ENCODE measurements at regions of chr7 and their contacts with region 1.

Region 1: DNA sequence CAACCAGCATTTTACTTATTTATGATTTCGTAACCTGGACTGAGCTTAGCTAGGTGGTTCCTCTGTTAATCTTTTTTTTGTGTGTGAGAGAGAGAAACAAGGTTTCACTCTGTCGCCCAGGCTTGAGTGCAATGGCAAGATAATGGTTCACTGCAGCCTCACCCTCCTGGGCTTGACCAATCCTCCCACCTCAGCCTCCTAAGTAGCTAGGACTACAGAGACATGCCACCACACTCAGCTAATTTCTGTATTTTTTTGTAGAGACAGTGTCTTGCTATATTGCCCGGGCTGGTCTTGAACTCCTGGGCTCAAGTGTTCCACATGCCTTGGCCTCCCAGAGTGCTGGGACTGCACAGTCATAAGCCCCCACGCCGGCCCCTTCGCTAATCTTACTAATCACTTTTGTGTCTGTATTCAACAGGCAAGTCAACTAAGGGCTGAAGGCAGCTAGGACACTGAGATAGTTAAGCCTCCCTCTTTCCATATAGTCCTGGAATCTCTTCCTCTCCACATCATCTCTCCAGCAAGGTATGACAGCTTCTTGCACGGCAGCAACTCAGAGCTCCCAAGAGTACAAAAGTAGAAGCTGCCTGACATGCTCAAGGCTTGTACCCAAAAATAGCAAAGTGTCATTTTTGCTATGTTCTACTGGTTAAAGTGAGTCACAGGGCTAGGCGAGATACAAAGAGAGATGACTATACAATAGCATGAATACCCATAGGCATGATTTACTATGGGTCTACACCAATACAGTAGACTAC is 11.3 kb downstream of the KMT2C start:
- DNase-seq: no peak
- H3K4me3 Mint-ChIP-seq: no peak overlapping the region
- H3K27ac Mint-ChIP-seq: peak overlapping the region; percentile 66
- H3K4me1 Mint-ChIP-seq: peaks cover 45% of the 10 kb centered on the region
- H3K27me3 Mint-ChIP-seq: no peaks in the 10 kb centered on the region

Region 2: GRCh38 chr7:152180587-152180986 is 243.9 kb before region 1 on chr7:
- intact Hi-C with region 1: no loop called
- DNase-seq: no peak
- H3K4me3 Mint-ChIP-seq: no peak overlapping the region
- H3K27ac Mint-ChIP-seq: no peak overlapping the region
- H3K4me1 Mint-ChIP-seq: peaks cover 17% of the 10 kb centered on the region
- H3K27me3 Mint-ChIP-seq: no peaks in the 10 kb centered on the region

Region 3: GRCh38 chr7:152383341-152384234 is 40.9 kb before region 1 on chr7:
- intact Hi-C with region 1: loop called (anchors 5 kb)
- DNase-seq: no peak
- H3K4me3 Mint-ChIP-seq: no peak overlapping the region
- H3K27ac Mint-ChIP-seq: no peak overlapping the region
- H3K4me1 Mint-ChIP-seq: peaks cover 6% of the 10 kb centered on the region
- H3K27me3 Mint-ChIP-seq: no peaks in the 10 kb centered on the region

Measured in activated T-helper 1 cell treated with anti-CD3 and anti-CD28 coated beads, Interleukin-12 subunit alpha, Interleukin-12 subunit beta, Interleukin-2, Interleukin-4 antibody, amounts not matched to agents 30 ng/mL and 10 ng/mL and 1 ng/mL, durations not matched to agents 14 hours and 24 hours and 36 hours (primary cell).